Activated CD8-positive, alpha-beta T cell treated with anti-CD3 and anti-CD28 coated beads, Interleukin-2, amount 10 ng/mL, durations not matched to agents 7 days and 5 days (primary cell): ENCODE measurements at regions of chr6 and their contacts with region 1.

Region 1: DNA sequence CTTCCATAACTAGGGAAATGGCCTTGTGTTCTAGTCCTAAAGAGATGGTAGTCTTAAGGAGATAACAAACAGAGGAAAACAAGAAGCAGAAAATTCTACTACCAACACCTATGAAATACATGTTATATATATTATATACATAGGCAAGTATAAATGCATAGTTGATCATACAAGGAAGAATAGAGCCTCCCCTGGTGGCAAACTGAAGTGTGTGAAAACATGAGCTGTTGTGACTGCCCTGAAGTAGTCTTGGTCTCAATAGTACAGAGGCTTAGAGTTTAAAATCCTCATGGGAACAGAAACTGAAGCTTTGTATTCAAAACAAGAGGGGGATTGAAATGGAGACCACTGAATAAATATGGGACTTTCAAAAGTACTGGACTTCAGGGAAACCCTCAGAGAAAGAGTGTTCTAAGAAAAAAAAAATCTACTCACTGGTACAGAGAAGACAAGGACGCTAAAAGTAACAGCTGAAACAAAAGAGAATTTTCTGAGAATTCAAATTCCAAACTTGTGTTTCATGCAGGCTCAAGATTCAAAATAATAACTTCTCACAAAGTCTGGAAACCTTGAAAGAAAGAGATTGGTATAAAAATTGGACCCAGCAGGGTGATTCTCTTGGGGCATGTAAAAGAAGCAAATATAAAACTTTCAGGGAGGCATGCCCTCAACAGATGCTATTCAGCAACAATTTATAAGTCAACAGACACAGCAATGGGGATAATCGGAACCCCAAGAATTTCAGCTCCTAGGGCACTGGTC is 59.7 kb upstream of the SAMD3 start:
- DNase-seq: peak; percentile 59
- ATAC-seq: peak; percentile 84
- H3K4me3 Mint-ChIP-seq: no peak overlapping the region
- H3K27ac Mint-ChIP-seq: peak overlapping the region; percentile 27
- H3K4me1 Mint-ChIP-seq: peaks cover 9% of the 10 kb centered on the region
- H3K27me3 Mint-ChIP-seq: no peaks in the 10 kb centered on the region

Region 2: GRCh38 chr6:130076512-130076911 is 205.9 kb before region 1 on chr6:
- CTCF ChIA-PET with region 1: interaction called, 22 read pairs
- POLR2A ChIA-PET with region 1: no interaction called
- DNase-seq: no peak
- ATAC-seq: no peak
- H3K4me3 Mint-ChIP-seq: no peak overlapping the region
- H3K27ac Mint-ChIP-seq: no peak overlapping the region
- H3K4me1 Mint-ChIP-seq: peaks cover 28% of the 10 kb centered on the region
- H3K27me3 Mint-ChIP-seq: no peaks in the 10 kb centered on the region

Region 3: GRCh38 chr6:130134582-130134981 is 147.8 kb before region 1 on chr6:
- CTCF ChIA-PET with region 1: interaction called, 12 read pairs
- POLR2A ChIA-PET with region 1: interaction called, 5 read pairs
- DNase-seq: no peak
- ATAC-seq: no peak
- H3K4me3 Mint-ChIP-seq: no peak overlapping the region
- H3K27ac Mint-ChIP-seq: peak overlapping the region; percentile 63
- H3K4me1 Mint-ChIP-seq: peaks cover 83% of the 10 kb centered on the region
- H3K27me3 Mint-ChIP-seq: no peaks in the 10 kb centered on the region

Region 4: DNA sequence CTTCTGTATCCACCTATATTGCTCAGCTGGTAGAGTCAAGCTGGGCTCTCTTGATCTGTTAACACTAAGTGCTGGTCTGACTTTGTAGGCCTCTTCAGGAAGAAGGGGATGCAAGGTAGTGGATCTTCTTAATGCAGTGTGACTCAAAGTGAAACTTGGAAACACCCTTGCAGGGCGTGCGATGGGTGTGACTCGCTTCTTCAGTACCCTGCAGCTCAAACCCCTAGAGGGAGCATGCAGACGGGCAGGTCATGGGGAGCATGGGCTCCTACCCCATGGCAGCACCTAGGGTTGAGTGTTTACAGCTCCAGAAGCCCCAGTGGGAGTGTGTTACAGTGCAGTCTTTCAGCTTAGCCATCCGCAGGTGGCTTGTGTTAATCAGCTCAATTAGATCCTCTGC is 58.9 kb before region 1 on chr6:
- CTCF ChIA-PET with region 1: interaction called, 28 read pairs
- POLR2A ChIA-PET with region 1: no interaction called
- DNase-seq: peak; percentile 86
- ATAC-seq: peak; percentile 97
- H3K4me3 Mint-ChIP-seq: peak overlapping the region; percentile 31
- H3K27ac Mint-ChIP-seq: peak overlapping the region; percentile 90
- H3K4me1 Mint-ChIP-seq: peaks cover 32% of the 10 kb centered on the region
- H3K27me3 Mint-ChIP-seq: no peaks in the 10 kb centered on the region